Heart right ventricle (tissue), 16 donors: ENCODE measurements at regions of chr15 and their contacts with region 1.

Region 1: DNA sequence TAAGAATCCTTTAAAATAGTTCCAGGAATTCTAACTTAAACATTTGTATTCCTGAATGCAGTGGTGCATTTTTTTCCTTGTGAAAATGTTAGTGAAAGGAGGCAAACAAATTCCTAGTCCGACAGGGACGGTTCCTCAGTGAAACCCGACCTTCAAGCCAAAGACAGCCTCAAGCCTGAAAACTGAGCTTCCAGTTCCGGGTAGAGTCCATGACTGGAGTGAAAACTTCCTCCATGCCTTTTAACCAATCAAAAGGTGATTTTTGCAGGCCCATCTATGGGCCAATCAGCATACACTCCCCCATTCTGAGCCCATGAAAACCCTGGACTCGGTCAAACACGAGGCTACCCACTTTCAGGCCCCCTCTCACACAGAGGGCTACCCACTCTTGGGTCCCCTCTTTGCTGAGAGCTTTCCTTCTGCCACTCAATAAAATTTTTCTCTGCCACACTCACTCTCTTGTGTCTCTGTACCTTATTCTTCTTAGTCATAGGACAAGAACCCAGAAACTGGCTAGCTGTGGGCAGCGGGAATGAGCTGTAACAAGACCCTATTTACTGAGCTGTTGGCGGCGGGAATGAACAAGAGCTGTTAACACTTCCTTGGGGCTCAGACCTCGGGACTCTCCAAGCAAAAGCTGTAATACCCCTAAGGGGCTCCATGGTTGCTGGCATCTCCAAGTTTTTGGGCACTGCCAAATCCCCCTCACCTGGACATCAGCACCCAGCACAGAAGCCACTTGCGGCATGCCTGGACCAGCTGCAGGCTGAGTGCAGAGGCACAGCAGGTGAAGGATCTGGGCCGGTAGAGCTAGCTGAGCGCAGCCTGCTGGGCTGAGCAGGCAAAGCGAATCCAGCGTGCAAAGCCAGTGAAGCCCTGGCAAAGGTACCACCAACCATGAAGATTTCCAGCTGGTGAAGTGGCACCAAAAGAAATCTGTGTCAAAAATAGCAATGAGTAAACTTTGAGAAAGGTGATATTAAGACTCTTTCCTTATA is 598.8 kb downstream of the MCTP2 start:
- DNase-seq: no peak
- ATAC-seq: no peak
- H3K4me3 ChIP-seq: no peak overlapping the region
- H3K27ac ChIP-seq: no peak overlapping the region
- H3K4me1 ChIP-seq: no peaks in the 10 kb centered on the region
- H3K27me3 ChIP-seq: peaks cover 0 to 17% (median 0%) of the 10 kb centered on the region in 7 donors
- CTCF ChIP-seq: no peak

Region 2: GRCh38 chr15:94882071-94882712 is 52.0 kb after region 1 on chr15:
- intact Hi-C with region 1: loop called in 1 of 10 experiments (anchors 10 kb)
- DNase-seq: no peak
- ATAC-seq: no peak
- H3K4me3 ChIP-seq: no peak overlapping the region
- H3K27ac ChIP-seq: no peak overlapping the region
- H3K4me1 ChIP-seq: no peaks in the 10 kb centered on the region
- H3K27me3 ChIP-seq: no peaks in the 10 kb centered on the region
- CTCF ChIP-seq: no peak